PC-3 (cell line): ENCODE measurements at regions of chr9 and their contacts with region 1.

Region 1: DNA sequence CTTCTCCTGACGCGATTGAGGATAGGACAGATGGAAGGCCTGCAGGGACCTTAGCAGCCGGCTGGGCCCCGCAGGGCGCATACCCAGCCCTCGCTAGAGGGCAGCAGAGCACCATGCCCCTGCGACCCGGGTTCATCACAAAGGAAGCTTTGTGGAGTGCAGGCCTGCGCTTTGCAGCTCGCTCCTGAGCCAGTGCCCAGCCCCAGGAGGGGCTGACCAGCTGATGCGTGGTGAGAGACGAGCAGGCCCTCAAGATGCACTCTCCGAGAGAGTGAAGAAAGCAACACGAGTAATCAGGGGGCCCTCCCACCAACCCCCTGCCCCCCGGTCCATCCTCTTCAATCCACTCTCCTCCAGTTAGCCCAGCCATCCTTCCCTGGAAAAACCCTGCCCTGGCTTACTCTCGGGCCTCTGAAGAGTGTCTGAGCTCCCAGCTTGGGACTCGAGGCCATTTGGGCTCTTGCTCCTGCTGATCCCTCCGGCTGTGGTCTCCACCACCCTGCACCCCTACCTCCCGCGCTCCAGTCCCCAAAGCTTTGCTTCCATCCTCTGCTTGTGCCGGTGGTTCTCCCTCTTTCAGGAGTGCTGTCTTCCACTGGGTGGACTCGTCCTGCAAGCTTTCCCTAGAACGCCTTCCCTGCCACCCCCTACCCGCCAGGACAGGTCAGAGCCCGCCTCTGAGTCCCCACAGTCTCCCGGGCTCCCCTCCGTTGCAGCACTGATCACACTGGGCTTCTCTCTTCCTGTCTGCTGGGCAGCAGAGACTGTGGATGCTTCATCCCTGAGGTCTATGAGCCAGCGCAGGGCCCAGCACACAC is 9.1 kb upstream of the KIF12 start:
- DNase-seq: peak; percentile 77
- ATAC-seq: peak; percentile 98
- H3K4me3 ChIP-seq: no peak overlapping the region
- H3K27ac ChIP-seq: no peak overlapping the region
- H3K4me1 ChIP-seq: peaks cover 19% of the 10 kb centered on the region
- H3K27me3 ChIP-seq: no peaks in the 10 kb centered on the region
- CTCF ChIP-seq: peak; percentile 86

Region 2: GRCh38 chr9:114082017-114082762 is 26.0 kb before region 1 on chr9:
- CTCF ChIA-PET with region 1: no interaction called
- POLR2A ChIA-PET with region 1: no interaction called
- intact Hi-C with region 1: loop called (anchors 2 kb)
- DNase-seq: peak; percentile 88
- ATAC-seq: peak; percentile 90
- H3K4me3 ChIP-seq: no peak overlapping the region
- H3K27ac ChIP-seq: no peak overlapping the region
- H3K4me1 ChIP-seq: peaks cover 11% of the 10 kb centered on the region
- H3K27me3 ChIP-seq: no peaks in the 10 kb centered on the region
- CTCF ChIP-seq: peak; percentile 82

Region 3: DNA sequence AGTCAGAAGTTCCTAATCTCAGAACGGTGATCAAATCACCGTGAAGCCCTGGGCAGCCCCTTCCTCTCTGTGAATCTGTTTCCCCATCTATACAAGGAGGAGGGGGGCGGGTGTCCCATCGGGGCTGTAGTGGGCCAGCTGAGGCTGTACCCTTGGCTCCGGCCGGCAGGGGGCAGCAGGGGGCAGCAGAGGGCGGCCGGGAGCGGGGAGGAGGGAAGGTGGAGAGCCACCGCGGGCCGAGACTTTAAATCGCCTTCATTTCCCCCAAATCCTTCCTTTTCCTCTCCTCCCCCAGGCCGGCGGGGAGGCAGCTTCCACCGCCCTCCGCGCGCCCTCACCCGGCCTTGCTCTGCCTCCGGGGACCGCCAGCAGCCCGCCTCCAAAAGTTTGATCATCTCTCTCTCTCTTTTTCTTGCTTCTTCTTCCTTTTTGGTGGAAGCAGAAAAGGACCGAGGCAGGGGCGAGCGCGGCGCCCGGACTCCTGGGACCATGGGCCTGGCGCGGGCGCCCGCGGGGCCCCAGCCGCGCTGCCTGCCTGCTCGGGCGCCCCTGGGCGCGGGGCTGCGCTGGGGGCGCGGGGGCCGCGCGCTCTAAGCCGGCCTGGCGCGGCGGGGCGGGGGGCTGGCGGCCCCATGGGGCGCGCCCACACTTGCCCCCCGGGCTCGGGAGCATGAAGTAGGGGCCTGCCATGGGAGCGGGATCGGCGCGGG is 47.2 kb after region 1 on chr9 and contains the start of gene COL27A1:
- CTCF ChIA-PET with region 1: interaction called, 8 read pairs
- POLR2A ChIA-PET with region 1: no interaction called
- intact Hi-C with region 1: loop called (anchors 1 kb)
- DNase-seq: peak; percentile 67
- ATAC-seq: peak; percentile 84
- H3K4me3 ChIP-seq: peak within 1 kb of the TSS; percentile 72
- H3K27ac ChIP-seq: no peak within 1 kb of the TSS
- H3K4me1 ChIP-seq: peaks cover 10% of the 10 kb centered on the region
- H3K27me3 ChIP-seq: no peaks in the 10 kb centered on the region
- CTCF ChIP-seq: peak; percentile 73
- total RNA-seq, gene COL27A1: 4.3 and 11.4 TPM in 2 replicates

Region 4: GRCh38 chr9:114276908-114277821 is 168.9 kb after region 1 on chr9:
- CTCF ChIA-PET with region 1: no interaction called
- POLR2A ChIA-PET with region 1: no interaction called
- intact Hi-C with region 1: loop called (anchors 5 kb)
- DNase-seq: peak; percentile 86
- ATAC-seq: peak; percentile 75
- H3K4me3 ChIP-seq: no peak overlapping the region
- H3K27ac ChIP-seq: peak overlapping the region; percentile 87
- H3K4me1 ChIP-seq: peaks cover 34% of the 10 kb centered on the region
- H3K27me3 ChIP-seq: no peaks in the 10 kb centered on the region
- CTCF ChIP-seq: no peak

Region 5: DNA sequence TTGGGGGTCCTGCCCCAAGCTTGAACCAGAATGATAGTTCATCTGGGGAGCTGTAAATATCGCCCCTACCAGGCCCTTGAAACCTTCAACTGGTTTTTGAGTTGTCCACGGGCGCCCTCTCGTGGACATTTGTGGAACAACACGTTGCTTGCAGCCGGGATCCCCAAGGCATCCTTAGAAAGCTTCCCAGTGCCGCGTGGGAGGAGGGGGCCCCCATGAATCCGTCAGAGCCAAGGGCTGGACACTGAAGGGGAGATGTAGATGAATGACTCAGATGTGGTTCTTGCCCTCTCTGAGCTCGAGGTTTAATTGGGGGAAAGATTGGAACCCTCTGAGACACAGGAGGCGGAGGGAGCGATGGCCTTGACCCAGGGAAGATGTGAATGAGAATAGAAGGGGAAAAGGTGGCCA is 182.8 kb after region 1 on chr9:
- CTCF ChIA-PET with region 1: interaction called, 7 read pairs
- POLR2A ChIA-PET with region 1: no interaction called
- intact Hi-C with region 1: loop called (anchors 1 kb)
- DNase-seq: peak; percentile 75
- ATAC-seq: peak; percentile 64
- H3K4me3 ChIP-seq: no peak overlapping the region
- H3K27ac ChIP-seq: no peak overlapping the region
- H3K4me1 ChIP-seq: no peaks in the 10 kb centered on the region
- H3K27me3 ChIP-seq: no peaks in the 10 kb centered on the region
- CTCF ChIP-seq: peak; percentile 85